PC-9 (cell line): ENCODE measurements at regions of chr15 and their contacts with region 1.

Region 1: GRCh38 chr15:95988351-95988805 is 342.1 kb upstream of the NR2F2 start:
- DNase-seq: peak; percentile 8 to 43
- H3K4me3 ChIP-seq: no peak overlapping the region
- H3K27ac ChIP-seq: no peak overlapping the region
- H3K4me1 ChIP-seq: peaks cover 5% of the 10 kb centered on the region; the same call in 1 of the 2 replicates
- H3K27me3 ChIP-seq: no peaks in the 10 kb centered on the region
- CTCF ChIP-seq: no peak

Region 2: DNA sequence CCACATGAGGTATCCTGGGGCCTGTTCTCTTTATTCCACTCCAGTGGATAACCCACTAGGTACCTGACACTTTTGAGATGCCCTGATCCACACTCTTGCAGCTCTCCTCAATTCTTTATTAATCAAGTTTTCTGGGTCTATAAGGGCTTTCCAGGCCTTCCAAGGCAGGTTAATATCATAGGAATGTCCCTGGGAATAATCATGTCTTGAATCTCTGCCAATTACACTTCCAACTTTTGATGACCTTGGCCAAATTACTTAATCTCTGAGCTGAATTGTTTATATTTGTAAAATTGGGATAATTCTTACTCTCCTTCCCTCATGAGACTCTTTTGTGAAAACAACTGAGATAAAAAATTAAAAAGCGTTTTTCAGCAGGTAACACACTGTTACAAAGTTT is 875.3 kb before region 1 on chr15:
- CTCF ChIA-PET with region 1: no interaction called
- POLR2A ChIA-PET with region 1: interaction called, 11 read pairs
- intact Hi-C with region 1: no loop called
- DNase-seq: no peak
- H3K4me3 ChIP-seq: no peak overlapping the region
- H3K27ac ChIP-seq: no peak overlapping the region
- H3K4me1 ChIP-seq: no peaks in the 10 kb centered on the region
- H3K27me3 ChIP-seq: no peaks in the 10 kb centered on the region
- CTCF ChIP-seq: no peak

Region 3: GRCh38 chr15:95536638-95537037 is 451.7 kb before region 1 on chr15:
- CTCF ChIA-PET with region 1: no interaction called
- POLR2A ChIA-PET with region 1: no interaction called
- intact Hi-C with region 1: no loop called
- DNase-seq: no peak
- H3K4me3 ChIP-seq: no peak overlapping the region
- H3K27ac ChIP-seq: no peak overlapping the region
- H3K4me1 ChIP-seq: no peaks in the 10 kb centered on the region
- H3K27me3 ChIP-seq: no peaks in the 10 kb centered on the region
- CTCF ChIP-seq: no peak